ENCODE measurements at regions of chr20 and their contacts with region 1.

Region 1: DNA sequence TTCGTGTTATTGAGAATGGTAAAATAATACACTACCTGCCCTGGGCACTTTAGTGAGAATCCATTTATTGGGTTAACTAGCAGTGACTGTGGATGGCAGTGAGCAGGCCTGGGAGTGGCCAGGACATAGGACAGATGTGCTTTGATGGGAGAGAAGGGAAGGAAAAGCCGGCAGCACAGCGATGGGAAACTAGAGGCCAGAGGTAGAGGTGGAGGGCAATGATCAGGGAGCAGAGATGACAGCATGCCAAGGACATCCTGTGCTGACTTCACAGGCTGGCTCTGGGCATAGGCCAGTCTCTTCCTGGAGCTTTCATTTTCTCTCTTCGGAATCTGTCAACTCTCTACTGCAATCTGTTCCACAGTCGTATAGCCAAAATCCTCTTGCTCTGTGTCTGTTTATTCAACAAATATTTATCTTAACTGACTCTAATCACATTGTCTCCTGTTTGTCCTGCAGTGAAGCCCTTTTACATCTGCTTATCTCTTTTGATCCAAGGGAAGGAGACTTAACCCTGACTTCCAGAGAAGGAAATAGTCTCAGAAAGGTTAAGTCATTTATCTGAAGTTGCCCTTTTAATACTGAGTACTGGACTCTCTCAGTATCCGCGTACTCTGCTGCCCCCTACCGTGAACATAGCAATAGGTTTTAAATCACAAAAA is 18.4 kb upstream of the MMP24 start:
- DNase-seq: peak; percentile 81
- H3K4me3 ChIP-seq: peak overlapping the region; percentile 46
- H3K27ac ChIP-seq: peak overlapping the region; percentile 31; the same call in 1 of the 2 replicates
- H3K4me1 ChIP-seq: 0 out of 2 replicates have a peak, but pooled peaks cover 6% of the 10 kb centered on the region
- H3K27me3 ChIP-seq: no peaks in the 10 kb centered on the region

Region 2: GRCh38 chr20:34426026-34426425 is 782.1 kb before region 1 on chr20:
- in situ Hi-C with region 1: no loop called
- DNase-seq: peak; percentile 56
- H3K4me3 ChIP-seq: no peak overlapping the region
- H3K27ac ChIP-seq: 0 out of 2 replicates have a peak overlapping the region, but pooled peaks have one; percentile 20
- H3K4me1 ChIP-seq: no peaks in the 10 kb centered on the region
- H3K27me3 ChIP-seq: no peaks in the 10 kb centered on the region

Region 3: GRCh38 chr20:34581341-34582184 is 626.5 kb before region 1 on chr20:
- in situ Hi-C with region 1: no loop called
- DNase-seq: peak; percentile 83
- H3K4me3 ChIP-seq: no peak overlapping the region
- H3K27ac ChIP-seq: peak overlapping the region; percentile 52
- H3K4me1 ChIP-seq: peaks cover 39% of the 10 kb centered on the region
- H3K27me3 ChIP-seq: no peaks in the 10 kb centered on the region

Region 4: DNA sequence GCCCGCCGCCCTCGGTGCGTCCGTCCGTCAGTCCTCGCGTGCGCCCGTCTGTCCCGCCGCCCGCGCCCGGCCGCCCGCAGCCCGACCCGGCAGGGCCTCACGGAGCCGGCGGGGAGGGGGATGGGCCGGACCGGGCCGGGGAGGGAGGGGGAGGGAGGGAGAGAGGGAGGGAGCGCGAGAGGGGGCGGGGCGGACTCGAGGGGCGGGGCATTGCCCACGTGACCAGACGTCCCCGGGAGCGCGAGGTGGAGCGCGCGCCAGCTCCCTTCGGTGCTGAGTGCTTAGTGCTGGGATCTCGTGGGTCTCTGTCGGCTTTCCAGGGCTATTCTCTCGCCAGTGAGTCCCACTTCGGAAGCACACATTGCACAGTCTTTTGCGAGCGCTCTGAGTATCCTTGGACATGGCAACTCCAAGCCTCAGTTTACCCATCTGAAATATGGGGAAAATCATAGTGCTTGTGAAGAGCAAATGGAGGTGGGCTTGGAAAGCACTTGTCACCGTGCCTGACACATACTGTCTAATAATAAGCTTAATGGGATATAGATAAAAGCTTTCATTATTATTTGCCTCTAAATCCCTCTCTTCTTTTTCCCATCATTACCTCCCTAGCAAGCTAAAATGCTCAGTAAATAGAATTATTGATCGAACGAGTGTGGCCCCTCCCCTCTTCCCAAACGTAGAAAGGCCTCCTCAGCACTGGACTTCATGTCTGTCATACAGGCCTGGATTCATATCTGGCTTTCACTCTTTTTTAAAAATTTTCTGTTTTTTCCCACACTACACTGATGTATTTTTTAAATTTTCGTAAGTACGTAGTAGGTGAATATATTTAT is 382.3 kb before region 1 on chr20 and contains the start of gene NCOA6:
- in situ Hi-C with region 1: loop called (anchors 25 kb)
- DNase-seq: peak; percentile 90
- H3K4me3 ChIP-seq: peak within 1 kb of the TSS; percentile 91
- H3K27ac ChIP-seq: peak within 1 kb of the TSS; percentile 64
- H3K4me1 ChIP-seq: peaks cover 10% of the 10 kb centered on the region; the same call in 1 of the 2 replicates
- H3K27me3 ChIP-seq: no peaks in the 10 kb centered on the region; the same call in 1 of the 2 replicates
- total RNA-seq, gene NCOA6: 6.3 and 6.6 TPM in 2 replicates

Region 5: GRCh38 chr20:35104685-35105295 is 103.3 kb before region 1 on chr20:
- in situ Hi-C with region 1: no loop called
- DNase-seq: no peak
- H3K4me3 ChIP-seq: no peak overlapping the region
- H3K27ac ChIP-seq: no peak overlapping the region
- H3K4me1 ChIP-seq: no peaks in the 10 kb centered on the region; the same call in 1 of the 2 replicates
- H3K27me3 ChIP-seq: no peaks in the 10 kb centered on the region